CD4-positive, alpha-beta T cell (primary cell): ENCODE measurements at regions of chr12 and their contacts with region 1.

Region 1: GRCh38 chr12:62581288-62582064 is 114.8 kb downstream of the MON2 start:
- DNase-seq: peak in 3 of 14 experiments; percentile 50 to 68 (median 65)
- ATAC-seq: peak; percentile 55
- H3K4me3 ChIP-seq: no peak overlapping the region
- H3K4me3 Mint-ChIP-seq: no peak overlapping the region
- H3K27ac ChIP-seq: no peak overlapping the region
- H3K27ac Mint-ChIP-seq: no peak overlapping the region
- H3K4me1 ChIP-seq: no peaks in the 10 kb centered on the region
- H3K4me1 Mint-ChIP-seq: no peaks in the 10 kb centered on the region
- H3K27me3 ChIP-seq: no peaks in the 10 kb centered on the region
- H3K27me3 Mint-ChIP-seq: no peaks in the 10 kb centered on the region
- CTCF ChIP-seq: peak; percentile 73

Region 2: DNA sequence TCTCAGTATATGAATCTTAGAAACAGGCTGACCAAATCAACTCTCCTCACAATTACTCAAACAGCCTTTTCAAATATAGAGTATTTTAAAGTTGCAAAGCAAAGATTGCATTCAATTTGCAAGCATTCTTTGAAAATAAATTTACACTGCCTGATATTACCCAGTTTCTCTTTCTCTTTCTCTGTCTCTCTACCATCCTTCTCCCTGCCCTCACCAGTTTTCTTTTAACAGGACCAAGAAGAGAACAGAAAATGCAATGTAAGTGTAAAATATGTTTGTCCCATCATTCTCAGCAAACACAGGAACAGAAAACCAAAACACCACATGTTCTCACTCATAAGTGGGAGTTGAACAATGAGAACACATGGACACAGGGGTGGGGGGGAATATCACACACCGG is 841.6 kb before region 1 on chr12:
- CTCF ChIA-PET with region 1: no interaction called
- POLR2A ChIA-PET with region 1: no interaction called
- intact Hi-C with region 1: no loop called
- DNase-seq: no peak
- ATAC-seq: no peak
- H3K4me3 ChIP-seq: no peak overlapping the region
- H3K4me3 Mint-ChIP-seq: no peak overlapping the region
- H3K27ac ChIP-seq: no peak overlapping the region
- H3K27ac Mint-ChIP-seq: no peak overlapping the region
- H3K4me1 ChIP-seq: no peaks in the 10 kb centered on the region
- H3K4me1 Mint-ChIP-seq: no peaks in the 10 kb centered on the region
- H3K27me3 ChIP-seq: no peaks in the 10 kb centered on the region
- H3K27me3 Mint-ChIP-seq: no peaks in the 10 kb centered on the region
- CTCF ChIP-seq: no peak

Region 3: GRCh38 chr12:62361048-62361447 is 220.4 kb before region 1 on chr12:
- CTCF ChIA-PET with region 1: no interaction called
- POLR2A ChIA-PET with region 1: no interaction called
- intact Hi-C with region 1: no loop called
- DNase-seq: no peak
- ATAC-seq: no peak
- H3K4me3 ChIP-seq: no peak overlapping the region
- H3K4me3 Mint-ChIP-seq: no peak overlapping the region
- H3K27ac ChIP-seq: no peak overlapping the region
- H3K27ac Mint-ChIP-seq: peak overlapping the region; percentile 7
- H3K4me1 ChIP-seq: no peaks in the 10 kb centered on the region
- H3K4me1 Mint-ChIP-seq: peaks cover 38% of the 10 kb centered on the region
- H3K27me3 ChIP-seq: no peaks in the 10 kb centered on the region
- H3K27me3 Mint-ChIP-seq: no peaks in the 10 kb centered on the region
- CTCF ChIP-seq: no peak

Region 4: DNA sequence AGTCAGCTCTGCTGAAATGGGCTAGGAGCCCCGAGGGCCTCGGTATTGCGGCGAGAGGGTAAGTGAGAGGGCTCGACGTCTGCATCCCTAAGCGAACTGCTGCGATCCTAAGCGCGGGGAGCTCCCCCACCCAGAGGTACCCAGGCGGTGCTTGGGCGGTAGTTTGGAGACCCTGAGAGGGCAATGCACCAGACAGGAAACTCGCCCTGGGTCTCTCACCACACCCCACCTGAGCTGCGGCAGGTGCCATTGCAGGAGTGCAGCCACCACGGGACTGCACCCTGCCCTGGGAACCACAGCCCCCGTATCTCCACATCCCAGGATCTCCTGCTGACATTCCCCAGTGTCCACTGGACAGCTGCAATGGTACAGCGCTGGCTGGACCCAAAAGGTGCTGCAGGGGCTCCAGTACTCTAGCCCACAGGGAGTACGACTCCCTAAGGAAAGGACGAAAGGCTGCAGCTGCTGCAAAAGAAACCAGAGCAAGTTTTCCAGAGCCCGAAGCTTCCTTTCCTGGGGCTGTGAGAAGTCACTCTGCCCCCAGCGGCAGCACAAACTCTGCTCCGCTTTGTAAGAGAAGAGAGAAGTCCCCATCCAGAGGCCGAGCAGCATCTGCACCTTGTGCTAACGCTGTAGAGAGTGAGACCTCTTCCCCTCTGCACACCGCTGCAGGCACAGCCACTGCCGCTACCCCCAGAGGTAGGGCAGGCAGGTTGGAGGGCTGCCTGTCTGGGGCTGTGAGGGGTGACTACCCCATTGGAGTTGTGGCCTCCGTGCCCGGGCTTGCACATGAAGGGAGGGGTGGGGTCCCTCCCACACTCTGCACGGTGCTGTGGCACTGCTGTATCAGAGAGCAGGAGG is 145.9 kb before region 1 on chr12:
- CTCF ChIA-PET with region 1: no interaction called
- POLR2A ChIA-PET with region 1: no interaction called
- intact Hi-C with region 1: loop called in 1 of 2 experiments (anchors 2 kb)
- DNase-seq: peak in 13 of 14 experiments; percentile 2 to 57 (median 19)
- ATAC-seq: peak; percentile 79
- H3K4me3 ChIP-seq: peak overlapping the region; percentile 52
- H3K4me3 Mint-ChIP-seq: peak overlapping the region; percentile 86
- H3K27ac ChIP-seq: no peak overlapping the region
- H3K27ac Mint-ChIP-seq: no peak overlapping the region
- H3K4me1 ChIP-seq: peaks cover 19% of the 10 kb centered on the region
- H3K4me1 Mint-ChIP-seq: peaks cover 15% of the 10 kb centered on the region
- H3K27me3 ChIP-seq: peaks cover 0 to 18% of the 10 kb centered on the region in 2 experiments
- H3K27me3 Mint-ChIP-seq: peaks cover 41% of the 10 kb centered on the region
- CTCF ChIP-seq: peak; percentile 19

Region 5: DNA sequence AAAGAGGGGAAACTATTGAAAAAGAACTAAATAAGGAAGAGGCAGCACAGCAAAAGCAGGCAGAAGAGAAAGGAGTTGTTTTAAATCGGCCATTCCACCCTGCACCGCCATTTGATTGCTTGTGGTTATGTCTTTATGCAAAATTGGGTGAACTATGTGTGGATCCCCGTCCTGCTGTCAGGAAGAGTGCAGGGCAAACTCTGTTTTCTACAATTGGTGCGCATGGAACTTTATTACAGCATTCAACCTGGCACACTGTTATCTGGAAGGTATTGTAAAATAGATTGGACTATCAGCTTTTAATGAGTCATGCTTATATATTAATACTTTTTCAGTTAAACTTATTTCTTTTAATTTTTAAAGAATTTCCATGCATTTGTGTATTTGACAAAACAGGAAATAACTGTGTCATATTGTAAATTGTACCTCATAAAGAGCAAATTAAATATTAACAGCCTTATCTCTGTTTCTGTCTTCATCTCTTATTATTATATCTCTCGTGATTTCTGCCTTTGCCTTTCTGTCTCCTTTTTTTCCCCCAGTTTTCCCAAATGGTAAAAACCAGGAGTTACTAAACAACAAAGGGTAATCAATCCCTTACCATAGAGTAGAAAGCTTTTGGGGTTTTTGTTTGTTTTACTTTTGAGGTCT is 28.4 kb before region 1 on chr12:
- CTCF ChIA-PET with region 1: interaction called, 3 read pairs
- POLR2A ChIA-PET with region 1: no interaction called
- intact Hi-C with region 1: loop called in 1 of 2 experiments (anchors 2 kb)
- DNase-seq: no peak
- ATAC-seq: no peak
- H3K4me3 ChIP-seq: no peak overlapping the region
- H3K4me3 Mint-ChIP-seq: no peak overlapping the region
- H3K27ac ChIP-seq: no peak overlapping the region
- H3K27ac Mint-ChIP-seq: no peak overlapping the region
- H3K4me1 ChIP-seq: no peaks in the 10 kb centered on the region
- H3K4me1 Mint-ChIP-seq: no peaks in the 10 kb centered on the region
- H3K27me3 ChIP-seq: no peaks in the 10 kb centered on the region
- H3K27me3 Mint-ChIP-seq: no peaks in the 10 kb centered on the region
- CTCF ChIP-seq: no peak

Region 6: GRCh38 chr12:62660756-62661155 is 79.3 kb after region 1 on chr12:
- CTCF ChIA-PET with region 1: no interaction called
- POLR2A ChIA-PET with region 1: no interaction called
- intact Hi-C with region 1: no loop called
- DNase-seq: no peak
- ATAC-seq: no peak
- H3K4me3 ChIP-seq: no peak overlapping the region
- H3K4me3 Mint-ChIP-seq: no peak overlapping the region
- H3K27ac ChIP-seq: no peak overlapping the region
- H3K27ac Mint-ChIP-seq: no peak overlapping the region
- H3K4me1 ChIP-seq: no peaks in the 10 kb centered on the region
- H3K4me1 Mint-ChIP-seq: no peaks in the 10 kb centered on the region
- H3K27me3 ChIP-seq: no peaks in the 10 kb centered on the region
- H3K27me3 Mint-ChIP-seq: peaks cover 4% of the 10 kb centered on the region
- CTCF ChIP-seq: no peak

Region 7: DNA sequence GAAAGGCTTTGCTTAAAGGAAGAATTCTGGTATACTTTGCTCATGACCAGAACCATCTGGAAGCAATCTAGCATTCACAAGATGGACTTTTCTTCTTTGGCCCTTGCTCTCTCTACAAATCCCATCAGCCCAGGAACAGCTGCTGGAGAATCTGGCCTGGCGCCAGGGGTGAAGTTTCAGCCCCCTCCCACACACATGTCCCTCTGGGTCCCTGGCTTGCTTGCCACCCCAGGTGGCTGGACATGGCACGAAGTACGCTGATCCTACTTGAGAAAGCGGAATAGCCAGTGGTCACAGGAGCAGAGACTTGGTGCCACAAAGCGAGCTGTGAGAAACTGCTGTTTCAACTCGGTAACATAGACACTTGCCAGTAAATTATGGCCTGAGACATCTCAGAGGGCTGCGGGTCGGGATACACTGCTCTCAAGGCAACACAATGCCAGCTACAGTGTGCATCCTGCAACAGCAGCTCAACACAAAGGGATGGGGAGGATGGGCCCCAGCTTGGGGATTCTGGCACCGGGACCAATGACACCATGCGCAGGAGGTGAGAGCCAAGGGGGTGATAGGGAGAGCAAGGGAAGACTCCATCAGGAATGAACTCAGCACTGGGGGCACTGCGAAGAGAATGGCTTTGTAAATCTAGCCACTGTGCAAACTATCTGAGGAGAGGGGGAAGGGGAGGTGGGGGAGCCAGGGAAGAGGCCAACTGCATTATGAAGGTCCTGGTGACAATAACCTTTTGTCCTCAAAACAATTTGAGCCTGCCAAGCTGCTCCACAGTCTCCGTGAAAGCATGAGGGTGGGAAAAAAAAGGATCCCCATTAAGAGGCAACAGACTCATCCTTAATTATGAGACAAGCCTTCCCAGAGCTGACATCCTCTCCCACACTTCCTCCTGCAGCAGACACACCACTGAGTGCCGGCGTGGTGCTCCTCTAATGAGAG is 133.6 kb after region 1 on chr12:
- CTCF ChIA-PET with region 1: no interaction called
- POLR2A ChIA-PET with region 1: no interaction called
- intact Hi-C with region 1: loop called in 1 of 2 experiments (anchors 10 kb)
- DNase-seq: no peak
- ATAC-seq: no peak
- H3K4me3 ChIP-seq: no peak overlapping the region
- H3K4me3 Mint-ChIP-seq: no peak overlapping the region
- H3K27ac ChIP-seq: no peak overlapping the region
- H3K27ac Mint-ChIP-seq: no peak overlapping the region
- H3K4me1 ChIP-seq: no peaks in the 10 kb centered on the region
- H3K4me1 Mint-ChIP-seq: no peaks in the 10 kb centered on the region
- H3K27me3 ChIP-seq: no peaks in the 10 kb centered on the region
- H3K27me3 Mint-ChIP-seq: no peaks in the 10 kb centered on the region
- CTCF ChIP-seq: no peak

Region 8: GRCh38 chr12:62793256-62794217 is 212.1 kb after region 1 on chr12:
- CTCF ChIA-PET with region 1: interaction called, 17 read pairs
- POLR2A ChIA-PET with region 1: interaction called, 3 read pairs
- intact Hi-C with region 1: loop called (anchors 1 kb)
- DNase-seq: peak; percentile 53 to 82 (median 68)
- ATAC-seq: peak; percentile 73
- H3K4me3 ChIP-seq: no peak overlapping the region
- H3K4me3 Mint-ChIP-seq: no peak overlapping the region
- H3K27ac ChIP-seq: no peak overlapping the region
- H3K27ac Mint-ChIP-seq: no peak overlapping the region
- H3K4me1 ChIP-seq: no peaks in the 10 kb centered on the region
- H3K4me1 Mint-ChIP-seq: no peaks in the 10 kb centered on the region
- H3K27me3 ChIP-seq: peaks cover 0 to 2% of the 10 kb centered on the region in 2 experiments
- H3K27me3 Mint-ChIP-seq: peaks cover 4% of the 10 kb centered on the region
- CTCF ChIP-seq: peak; percentile 98

Region 9: DNA sequence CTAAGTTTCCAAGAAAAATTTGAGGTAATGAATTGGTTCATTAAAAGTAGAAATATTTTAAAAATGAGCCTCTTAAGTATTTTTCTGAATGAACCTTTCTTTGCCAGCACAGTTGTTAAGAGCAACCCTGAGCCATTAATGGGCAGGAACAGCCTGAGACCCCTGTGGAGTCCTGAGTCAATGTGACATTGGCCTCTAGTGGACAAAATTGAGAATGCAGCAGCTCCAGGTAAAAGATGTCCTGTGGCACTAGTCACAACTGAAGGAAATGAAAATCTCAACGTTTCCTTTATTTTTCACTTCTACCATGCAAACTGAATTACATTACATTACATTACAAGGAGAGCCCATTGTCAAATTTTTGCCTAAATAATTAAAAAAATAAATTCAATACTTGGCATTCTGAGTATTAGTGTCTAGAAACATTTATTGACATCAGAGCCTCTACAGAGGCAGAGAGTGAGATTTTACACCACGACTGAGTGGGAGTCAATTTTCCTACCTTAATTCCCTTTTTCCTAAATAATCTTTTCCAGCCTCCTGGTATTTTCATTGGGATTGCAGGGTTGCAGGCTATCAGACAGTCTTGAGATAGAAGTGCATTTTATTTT is 217.8 kb after region 1 on chr12:
- CTCF ChIA-PET with region 1: interaction called, 17 read pairs
- POLR2A ChIA-PET with region 1: interaction called, 6 read pairs
- intact Hi-C with region 1: loop called (anchors 1 kb)
- DNase-seq: peak in 12 of 14 experiments; percentile 10 to 75 (median 29)
- ATAC-seq: peak; percentile 78
- H3K4me3 ChIP-seq: no peak overlapping the region
- H3K4me3 Mint-ChIP-seq: no peak overlapping the region
- H3K27ac ChIP-seq: no peak overlapping the region
- H3K27ac Mint-ChIP-seq: no peak overlapping the region
- H3K4me1 ChIP-seq: no peaks in the 10 kb centered on the region
- H3K4me1 Mint-ChIP-seq: no peaks in the 10 kb centered on the region
- H3K27me3 ChIP-seq: peaks cover 0 to 2% of the 10 kb centered on the region in 2 experiments
- H3K27me3 Mint-ChIP-seq: peaks cover 4% of the 10 kb centered on the region
- CTCF ChIP-seq: peak; percentile 88